ENCODE measurements at regions of chr17 and their contacts with region 1.

Region 1: GRCh38 chr17:2814481-2815341 is 18.5 kb downstream of the RAP1GAP2 start:
- DNase-seq: peak; percentile 96
- ATAC-seq: peak; percentile 84
- H3K4me3 Mint-ChIP-seq: peak overlapping the region; percentile 69
- H3K27ac Mint-ChIP-seq: peak overlapping the region; percentile 93
- H3K4me1 Mint-ChIP-seq: peaks cover 34% of the 10 kb centered on the region
- H3K27me3 Mint-ChIP-seq: peaks cover 23% of the 10 kb centered on the region

Region 2: GRCh38 chr17:2786176-2786881 is 28.4 kb before region 1 on chr17:
- CTCF ChIA-PET with region 1: interaction called, 26 read pairs
- POLR2A ChIA-PET with region 1: interaction called, 30 read pairs
- DNase-seq: peak; percentile 91
- ATAC-seq: peak; percentile 98
- H3K4me3 Mint-ChIP-seq: no peak overlapping the region
- H3K27ac Mint-ChIP-seq: no peak overlapping the region
- H3K4me1 Mint-ChIP-seq: peaks cover 20% of the 10 kb centered on the region
- H3K27me3 Mint-ChIP-seq: peaks cover 27% of the 10 kb centered on the region

Region 3: GRCh38 chr17:2796164-2797125 is 18.3 kb before region 1 on chr17 and contains the start of gene RAP1GAP2:
- CTCF ChIA-PET with region 1: interaction called, 26 read pairs
- POLR2A ChIA-PET with region 1: interaction called, 30 read pairs
- DNase-seq: peak; percentile 88
- ATAC-seq: peak; percentile 82
- H3K4me3 Mint-ChIP-seq: peak within 1 kb of the TSS; percentile 77
- H3K27ac Mint-ChIP-seq: peak within 1 kb of the TSS; percentile 50
- H3K4me1 Mint-ChIP-seq: peaks cover 78% of the 10 kb centered on the region
- H3K27me3 Mint-ChIP-seq: peaks cover 39% of the 10 kb centered on the region
- total RNA-seq, gene RAP1GAP2: 9.4 to 11.0 TPM

Region 4: GRCh38 chr17:2825253-2825970 is 10.7 kb after region 1 on chr17:
- CTCF ChIA-PET with region 1: interaction called, 10 read pairs
- POLR2A ChIA-PET with region 1: interaction called, 10 read pairs
- DNase-seq: no peak
- ATAC-seq: no peak
- H3K4me3 Mint-ChIP-seq: no peak overlapping the region
- H3K27ac Mint-ChIP-seq: no peak overlapping the region
- H3K4me1 Mint-ChIP-seq: peaks cover 14% of the 10 kb centered on the region
- H3K27me3 Mint-ChIP-seq: peaks cover 27% of the 10 kb centered on the region

Region 5: GRCh38 chr17:2924211-2924610 is 109.5 kb after region 1 on chr17:
- CTCF ChIA-PET with region 1: no interaction called
- POLR2A ChIA-PET with region 1: no interaction called
- DNase-seq: no peak
- ATAC-seq: no peak
- H3K4me3 Mint-ChIP-seq: no peak overlapping the region
- H3K27ac Mint-ChIP-seq: no peak overlapping the region
- H3K4me1 Mint-ChIP-seq: no peaks in the 10 kb centered on the region
- H3K27me3 Mint-ChIP-seq: no peaks in the 10 kb centered on the region